ENCODE measurements at regions of chr2 and their contacts with region 1.

Region 1: DNA sequence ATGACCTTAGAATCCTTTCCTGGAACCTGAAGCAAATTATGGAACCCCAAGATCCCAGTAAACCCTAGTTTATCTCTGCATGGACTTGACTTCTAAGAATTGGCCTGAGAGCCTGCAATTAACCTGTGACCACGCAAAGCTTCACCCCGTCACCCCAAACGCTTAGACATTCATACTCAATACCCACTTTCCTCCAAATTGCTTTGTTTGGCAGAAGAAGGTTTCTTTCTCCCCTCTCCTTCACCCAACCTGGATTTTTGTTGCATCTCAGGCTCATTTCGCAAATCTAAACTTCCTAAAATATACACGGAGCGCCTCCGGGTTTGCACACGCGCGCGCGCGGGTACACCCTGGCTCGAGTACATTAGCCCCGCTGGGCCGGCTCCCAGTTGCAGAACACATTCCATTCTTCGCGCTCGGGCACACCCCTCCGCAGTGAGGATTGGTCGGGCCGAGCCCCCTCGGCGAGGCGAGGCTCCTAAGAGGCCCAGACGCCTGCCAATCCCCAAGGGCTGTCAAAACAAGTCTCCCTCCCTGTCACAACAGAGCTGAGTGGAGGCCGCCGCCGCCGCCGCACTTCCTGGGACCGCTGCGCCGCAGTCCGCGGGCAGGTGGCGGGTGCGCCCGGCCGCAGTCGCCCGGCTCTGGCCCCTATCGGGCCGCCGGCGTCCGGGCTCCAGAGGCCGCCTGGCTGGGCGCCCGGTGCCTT is at the start of gene PLCL1:
- DNase-seq: peak; percentile 88
- H3K4me3 Mint-ChIP-seq: peak within 1 kb of the TSS; percentile 92
- H3K27ac Mint-ChIP-seq: no peak within 1 kb of the TSS
- H3K4me1 Mint-ChIP-seq: peaks cover 34% of the 10 kb centered on the region
- H3K27me3 Mint-ChIP-seq: peaks cover 29% of the 10 kb centered on the region
- total RNA-seq, gene PLCL1: 0.62 and 0.78 TPM in 2 replicates

Region 2: GRCh38 chr2:197760293-197760657 is 43.9 kb before region 1 on chr2:
- intact Hi-C with region 1: no loop called
- DNase-seq: no peak
- H3K4me3 Mint-ChIP-seq: no peak overlapping the region
- H3K27ac Mint-ChIP-seq: no peak overlapping the region
- H3K4me1 Mint-ChIP-seq: no peaks in the 10 kb centered on the region
- H3K27me3 Mint-ChIP-seq: peaks cover 11% of the 10 kb centered on the region

Region 3: GRCh38 chr2:197889041-197889440 is 84.8 kb after region 1 on chr2:
- intact Hi-C with region 1: loop called (anchors 2 kb)
- DNase-seq: peak; percentile 41
- H3K4me3 Mint-ChIP-seq: peak overlapping the region; percentile 5
- H3K27ac Mint-ChIP-seq: peak overlapping the region; percentile 59
- H3K4me1 Mint-ChIP-seq: peaks cover 53% of the 10 kb centered on the region
- H3K27me3 Mint-ChIP-seq: no peaks in the 10 kb centered on the region

Region 4: GRCh38 chr2:197934934-197935289 is 130.7 kb after region 1 on chr2:
- intact Hi-C with region 1: loop called (anchors 5 kb)
- DNase-seq: no peak
- H3K4me3 Mint-ChIP-seq: peak overlapping the region; percentile 1
- H3K27ac Mint-ChIP-seq: peak overlapping the region; percentile 23
- H3K4me1 Mint-ChIP-seq: peaks cover 16% of the 10 kb centered on the region
- H3K27me3 Mint-ChIP-seq: peaks cover 3% of the 10 kb centered on the region

Region 5: DNA sequence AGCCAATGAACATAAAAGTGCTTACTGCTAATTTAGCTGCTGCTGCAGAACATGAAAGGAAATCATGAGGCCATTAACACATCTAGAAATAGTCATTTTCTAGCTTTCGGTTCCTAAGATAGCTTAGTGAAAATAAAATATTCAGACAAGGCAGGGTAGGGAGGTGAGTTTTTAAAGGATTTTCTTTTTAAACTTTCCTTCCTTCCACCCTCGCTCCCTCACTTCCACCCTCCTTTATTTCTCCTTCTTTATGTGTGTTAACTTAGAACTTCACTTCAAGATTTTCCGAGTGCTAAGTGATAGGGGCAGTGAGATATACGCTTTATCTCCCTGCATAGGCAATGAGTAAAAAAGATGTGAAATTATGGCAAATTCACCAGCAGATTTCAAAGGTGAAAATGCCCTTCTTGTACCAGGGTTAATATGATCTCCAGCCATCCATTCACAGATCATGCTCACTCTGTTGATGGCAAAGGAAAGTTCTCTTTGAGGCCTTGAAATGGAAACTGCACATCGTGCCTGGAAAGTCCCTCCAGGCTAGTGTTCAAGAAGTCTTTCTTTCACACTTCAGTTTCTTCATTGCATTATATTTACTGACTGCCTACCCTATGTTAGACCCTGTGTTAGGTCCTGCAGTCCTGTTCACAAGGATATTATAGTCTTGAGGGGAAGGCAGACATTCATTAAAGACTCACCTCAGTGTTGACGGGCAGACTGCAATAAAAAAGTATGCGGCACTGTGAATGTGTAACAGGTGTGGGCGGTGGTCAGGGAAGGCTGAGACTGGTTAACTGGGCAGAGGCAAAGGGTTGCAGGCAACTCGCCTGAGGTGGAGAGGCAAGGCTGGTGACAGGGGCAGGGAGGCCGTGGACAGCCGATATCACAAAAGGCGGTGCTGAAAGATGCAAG is 201.0 kb after region 1 on chr2:
- intact Hi-C with region 1: loop called (anchors 1 kb)
- DNase-seq: peak; percentile 30
- H3K4me3 Mint-ChIP-seq: peak overlapping the region; percentile 46
- H3K27ac Mint-ChIP-seq: peak overlapping the region; percentile 76
- H3K4me1 Mint-ChIP-seq: peaks cover 50% of the 10 kb centered on the region
- H3K27me3 Mint-ChIP-seq: no peaks in the 10 kb centered on the region

Region 6: GRCh38 chr2:198127627-198128026 is 323.4 kb after region 1 on chr2:
- intact Hi-C with region 1: loop called (anchors 1 kb)
- DNase-seq: peak; percentile 3
- H3K4me3 Mint-ChIP-seq: no peak overlapping the region
- H3K27ac Mint-ChIP-seq: no peak overlapping the region
- H3K4me1 Mint-ChIP-seq: no peaks in the 10 kb centered on the region
- H3K27me3 Mint-ChIP-seq: peaks cover 5% of the 10 kb centered on the region